GM13977 (cell line): ENCODE measurements at regions of chr11 and their contacts with region 1.

Region 1: GRCh38 chr11:10659339-10660216 is 34.0 kb downstream of the IRAG1 start:
- DNase-seq: no peak
- CTCF ChIP-seq: no peak

Region 2: DNA sequence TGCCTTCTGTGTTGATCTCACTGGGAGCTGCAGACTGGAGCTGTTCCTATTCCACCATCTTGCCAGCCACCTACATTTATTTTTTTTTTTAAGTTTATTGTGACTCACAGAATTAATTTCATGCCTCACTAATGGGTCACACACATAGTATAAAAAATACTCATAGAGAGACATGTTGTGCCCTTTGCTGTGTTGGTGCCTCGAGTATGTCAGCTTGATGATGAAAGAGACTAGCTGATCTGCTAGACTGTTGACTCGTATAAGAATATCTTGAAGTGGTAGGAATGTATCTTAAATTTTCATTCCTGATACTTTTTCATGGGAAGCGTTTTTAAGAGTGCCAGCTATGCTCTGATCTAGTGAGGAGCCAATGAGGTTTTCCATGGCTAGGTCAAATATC is 233.1 kb before region 1 on chr11:
- in situ Hi-C with region 1: no loop called
- DNase-seq: no peak
- CTCF ChIP-seq: no peak

Region 3: DNA sequence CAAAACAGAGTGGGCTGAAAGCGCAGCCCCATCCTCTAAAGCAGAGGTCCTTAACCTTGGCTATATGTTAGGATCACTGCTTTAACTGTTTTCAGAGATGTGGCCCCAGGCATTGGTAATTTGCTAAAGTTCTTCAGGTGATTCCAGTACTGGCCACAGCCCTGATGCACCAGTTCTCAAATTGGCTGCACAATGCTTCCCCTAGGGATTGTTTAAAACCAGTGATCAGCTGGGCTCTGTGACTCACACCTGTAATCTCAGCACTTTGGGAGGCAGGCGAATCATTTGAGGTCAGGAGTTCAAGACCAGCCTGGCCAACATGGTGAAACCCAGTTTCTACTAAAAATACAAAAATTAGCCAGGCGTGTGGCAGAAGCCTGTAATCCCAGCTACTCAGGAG is 42.4 kb after region 1 on chr11:
- in situ Hi-C with region 1: no loop called
- DNase-seq: no peak
- CTCF ChIP-seq: no peak

Region 4: GRCh38 chr11:10725114-10725906 is 65.7 kb after region 1 on chr11:
- in situ Hi-C with region 1: loop called (anchors 10 kb)
- DNase-seq: no peak
- CTCF ChIP-seq: no peak